ENCODE measurements at regions of chr10 and their contacts with region 1.

Region 1: DNA sequence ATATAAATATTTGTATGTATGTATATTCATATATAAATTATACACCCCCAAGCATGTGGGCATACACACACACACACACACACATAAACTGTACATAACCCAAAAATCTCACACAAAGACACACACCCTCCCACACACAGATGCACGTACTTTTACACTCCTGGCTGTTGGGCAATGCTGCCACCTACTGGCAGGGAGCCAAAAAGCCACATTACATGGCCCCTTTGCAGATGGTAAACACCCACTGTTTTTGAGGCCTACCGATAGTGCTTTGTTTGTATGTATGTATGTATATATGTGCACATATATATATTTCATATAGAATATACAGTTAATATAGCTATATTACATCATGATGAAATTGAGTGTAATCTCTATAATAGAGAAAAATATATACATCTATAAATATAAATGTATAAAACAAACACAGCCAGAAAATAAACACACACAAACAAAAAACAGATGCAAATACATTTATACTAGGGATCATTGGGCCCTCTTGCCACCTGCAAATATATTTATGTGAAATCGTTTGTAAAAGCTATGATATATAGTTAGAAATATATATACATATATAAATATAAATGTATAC is 120.1 kb upstream of the ACBD5 start:
- DNase-seq: peak; percentile 78 to 81 (median 81)
- H3K4me3 ChIP-seq: no peak overlapping the region
- H3K4me3 Mint-ChIP-seq: no peak overlapping the region
- H3K27ac ChIP-seq: no peak overlapping the region
- H3K27ac Mint-ChIP-seq: no peak overlapping the region
- H3K4me1 ChIP-seq: no peaks in the 10 kb centered on the region
- H3K4me1 Mint-ChIP-seq: no peaks in the 10 kb centered on the region
- H3K27me3 ChIP-seq: no peaks in the 10 kb centered on the region
- H3K27me3 Mint-ChIP-seq: no peaks in the 10 kb centered on the region

Region 2: GRCh38 chr10:27252267-27253000 is 108.2 kb before region 1 on chr10:
- CTCF ChIA-PET with region 1: interaction called, 14 read pairs
- POLR2A ChIA-PET with region 1: no interaction called
- intact Hi-C with region 1: no loop called
- DNase-seq: peak; percentile 74 to 82 (median 78)
- H3K4me3 ChIP-seq: peak overlapping the region in 1 of 2 donors; percentile 47
- H3K4me3 Mint-ChIP-seq: peak overlapping the region; percentile 77 to 88 (median 81)
- H3K27ac ChIP-seq: peak overlapping the region; percentile 58
- H3K27ac Mint-ChIP-seq: peak overlapping the region; percentile 55 to 91 (median 85)
- H3K4me1 ChIP-seq: peaks cover 3% of the 10 kb centered on the region
- H3K4me1 Mint-ChIP-seq: peaks cover 5 to 10% (median 7%) of the 10 kb centered on the region in 4 donors
- H3K27me3 ChIP-seq: no peaks in the 10 kb centered on the region
- H3K27me3 Mint-ChIP-seq: no peaks in the 10 kb centered on the region

Region 3: GRCh38 chr10:27413387-27413786 is 52.7 kb after region 1 on chr10:
- CTCF ChIA-PET with region 1: no interaction called
- POLR2A ChIA-PET with region 1: no interaction called
- intact Hi-C with region 1: no loop called
- DNase-seq: no peak
- H3K4me3 ChIP-seq: no peak overlapping the region
- H3K4me3 Mint-ChIP-seq: no peak overlapping the region
- H3K27ac ChIP-seq: no peak overlapping the region
- H3K27ac Mint-ChIP-seq: no peak overlapping the region
- H3K4me1 ChIP-seq: no peaks in the 10 kb centered on the region
- H3K4me1 Mint-ChIP-seq: no peaks in the 10 kb centered on the region
- H3K27me3 ChIP-seq: no peaks in the 10 kb centered on the region
- H3K27me3 Mint-ChIP-seq: peaks cover 8 to 16% of the 10 kb centered on the region in 2 donors

Measured in CD4-positive, alpha-beta memory T cell (primary cell).